Dorsolateral prefrontal cortex (tissue), 120 donors: ENCODE measurements at regions of chr10 and their contacts with region 1.

Region 1: DNA sequence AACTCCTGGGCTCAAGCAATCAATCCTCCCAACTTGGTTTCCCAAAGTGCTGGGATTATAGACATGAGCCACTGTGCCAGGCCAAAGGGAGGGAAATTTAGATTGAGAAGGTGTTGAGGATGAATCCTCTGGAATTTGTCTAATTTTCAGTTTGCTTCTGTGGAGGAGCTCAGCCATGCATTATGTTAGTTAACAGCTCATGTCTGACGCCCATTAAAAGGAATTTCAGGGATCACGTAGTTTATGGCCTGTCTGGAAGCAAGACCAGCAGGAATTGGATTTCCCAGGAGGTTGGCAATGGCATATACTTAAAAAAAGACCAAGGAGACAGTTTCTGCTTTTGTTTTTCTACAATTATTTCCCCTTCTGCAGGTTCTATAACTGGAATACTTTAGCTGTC is 165.7 kb downstream of the OTUD1 start:
- DNase-seq: no peak
- H3K4me3 ChIP-seq: no peak overlapping the region
- H3K27ac ChIP-seq: no peak overlapping the region
- H3K27me3 ChIP-seq: peaks cover 0 to 2% (median 0%) of the 10 kb centered on the region in 45 donors
- CTCF ChIP-seq: no peak

Region 2: DNA sequence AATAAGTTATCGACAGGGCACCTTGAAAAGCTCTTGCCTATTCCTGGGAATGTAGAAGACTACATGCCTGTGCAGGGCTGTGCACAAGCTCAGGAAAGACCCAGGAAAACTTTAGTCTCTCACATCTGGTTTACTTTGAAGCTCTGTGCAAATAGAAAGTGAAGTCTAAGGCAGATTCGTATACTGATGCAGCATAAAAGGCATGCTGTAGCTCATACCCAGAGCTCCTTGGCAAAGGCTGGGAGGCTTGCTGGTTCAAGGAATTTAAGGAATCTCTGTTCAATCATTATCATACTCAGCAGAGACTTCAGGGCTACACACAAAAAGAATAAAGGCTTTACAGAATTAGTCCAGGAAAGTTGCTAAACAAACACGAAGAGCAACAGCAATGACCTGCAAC is 26.3 kb after region 1 on chr10:
- intact Hi-C with region 1: loop called in 1 of 2 experiments (anchors 2 kb)
- DNase-seq: no peak
- H3K4me3 ChIP-seq: no peak overlapping the region
- H3K27ac ChIP-seq: no peak overlapping the region
- H3K27me3 ChIP-seq: no peaks in the 10 kb centered on the region
- CTCF ChIP-seq: no peak